OCI-LY7 (cell line): ENCODE measurements at regions of chr11 and their contacts with region 1.

Region 1: DNA sequence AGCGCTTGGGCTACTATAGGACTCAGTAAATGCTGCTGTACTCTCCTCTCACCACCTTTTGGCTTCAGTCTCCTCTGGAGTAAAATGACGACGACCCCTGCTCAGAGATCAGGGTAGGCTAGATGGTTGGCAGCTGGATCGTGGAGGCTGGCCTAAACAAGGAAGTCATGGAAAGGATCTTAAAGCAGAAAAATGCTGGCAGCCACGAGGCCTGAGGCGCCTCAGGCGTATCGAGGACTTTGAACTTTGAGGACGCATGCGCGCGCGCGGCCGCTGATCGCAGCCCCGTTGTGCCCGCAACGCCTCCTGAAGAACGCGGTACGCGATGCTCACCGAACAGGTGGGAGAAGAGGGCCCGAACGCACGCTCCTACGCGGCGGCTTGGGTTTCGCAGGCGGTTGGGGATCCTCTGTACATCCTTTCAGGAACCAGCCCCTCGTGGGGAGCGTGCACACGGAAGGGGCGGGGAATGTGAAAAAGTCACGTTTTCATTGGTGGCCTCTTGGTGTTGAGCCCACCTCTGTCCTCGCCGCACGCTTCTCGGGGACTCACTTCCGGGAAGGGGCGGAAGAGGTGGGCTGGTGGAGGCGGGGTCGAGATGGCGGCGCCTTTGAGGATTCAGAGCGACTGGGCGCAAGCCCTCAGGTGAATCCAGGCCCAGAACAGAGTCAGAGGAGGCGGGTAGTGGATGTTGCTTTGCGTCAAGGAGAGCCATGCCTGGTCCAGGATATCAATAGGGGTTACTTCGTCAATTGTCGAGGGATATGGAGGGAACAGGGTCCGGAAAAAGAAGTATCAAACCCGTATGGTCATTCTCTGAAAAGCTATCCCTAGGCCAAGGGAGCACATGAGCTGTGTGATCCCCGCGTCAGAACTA is at the starts of genes COA4 and PAAF1:
- DNase-seq: peak; percentile 99
- H3K4me3 ChIP-seq: peak within 1 kb of the TSS; percentile 95
- H3K27ac ChIP-seq: peak within 1 kb of the TSS; percentile 92
- H3K4me1 ChIP-seq: peaks cover 26% of the 10 kb centered on the region
- CTCF ChIP-seq: no peak
- total RNA-seq, gene COA4: 153 and 171 TPM in 2 replicates
- total RNA-seq, gene PAAF1: 11.2 and 12.3 TPM in 2 replicates

Region 2: DNA sequence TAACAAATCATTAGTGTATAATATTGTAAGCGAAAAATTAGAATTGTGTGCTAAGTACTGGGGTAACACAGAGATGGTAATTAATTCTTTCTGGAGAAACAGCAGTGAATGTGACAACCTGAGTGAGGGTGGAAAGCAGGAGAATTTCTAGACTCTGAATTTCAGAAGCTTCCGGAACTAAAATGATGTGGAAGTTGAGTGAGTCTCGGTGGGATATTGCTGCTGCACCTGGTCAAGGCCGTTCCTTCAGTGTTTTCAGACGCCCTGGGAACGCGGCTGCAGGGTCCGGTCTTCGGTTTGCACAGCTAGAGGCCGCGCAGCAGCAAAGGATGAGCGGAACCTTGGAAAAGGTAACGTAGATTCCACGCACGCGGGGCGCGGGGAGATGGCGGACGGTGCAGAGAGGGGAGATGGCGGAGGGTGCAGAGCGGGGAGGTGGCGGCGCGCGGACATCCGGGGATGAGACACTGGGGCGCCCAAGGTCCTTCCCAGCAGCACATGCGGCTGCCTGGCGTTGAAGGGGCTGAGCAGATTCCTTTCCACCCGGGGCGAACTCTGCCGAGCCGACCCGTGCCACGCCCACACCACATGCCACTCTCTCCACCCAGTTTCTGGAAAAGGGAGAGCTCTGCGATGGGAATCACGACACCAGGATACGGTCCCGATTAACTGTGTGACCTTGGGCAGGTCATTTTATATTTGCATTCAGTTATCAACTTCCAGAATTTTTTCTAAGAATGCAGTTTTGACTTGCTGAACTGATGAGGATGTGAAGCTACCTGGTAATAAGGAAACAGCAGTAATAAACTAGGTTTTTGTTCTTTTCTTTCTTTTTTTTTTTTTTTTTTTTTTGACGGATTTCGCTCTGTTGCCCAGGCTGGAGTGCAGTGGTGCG is 88.8 kb before region 1 on chr11 and contains the start of gene MRPL48:
- CTCF ChIA-PET with region 1: no interaction called
- POLR2A ChIA-PET with region 1: interaction called, 3 read pairs
- intact Hi-C with region 1: loop called (anchors 2 kb)
- DNase-seq: peak; percentile 92
- H3K4me3 ChIP-seq: peak within 1 kb of the TSS; percentile 77
- H3K27ac ChIP-seq: peak within 1 kb of the TSS; percentile 92
- H3K4me1 ChIP-seq: peaks cover 49% of the 10 kb centered on the region
- CTCF ChIP-seq: no peak
- total RNA-seq, gene MRPL48: 167 and 180 TPM in 2 replicates

Region 3: DNA sequence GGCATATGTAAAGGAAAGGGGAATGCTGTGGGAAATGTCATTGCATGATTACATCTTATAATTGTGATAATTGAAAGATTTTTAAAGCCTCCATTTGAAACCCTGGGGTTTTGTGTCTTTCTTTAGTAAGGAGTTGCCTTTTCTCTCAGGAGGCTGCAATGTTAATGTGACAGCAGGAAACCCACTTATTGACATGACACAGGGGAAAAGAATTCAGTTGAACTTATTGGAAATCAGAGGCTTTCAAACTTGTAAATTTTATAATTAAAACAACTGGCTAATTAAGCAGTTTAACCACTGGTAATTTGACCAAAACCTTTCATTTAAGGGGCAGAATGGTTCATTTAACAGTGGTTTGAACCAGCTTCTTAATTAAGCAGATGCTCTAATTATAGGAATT is 57.8 kb before region 1 on chr11:
- CTCF ChIA-PET with region 1: no interaction called
- POLR2A ChIA-PET with region 1: no interaction called
- intact Hi-C with region 1: no loop called
- DNase-seq: no peak
- H3K4me3 ChIP-seq: no peak overlapping the region
- H3K27ac ChIP-seq: no peak overlapping the region
- H3K4me1 ChIP-seq: no peaks in the 10 kb centered on the region
- CTCF ChIP-seq: no peak

Region 4: GRCh38 chr11:73893041-73893440 is 16.4 kb after region 1 on chr11:
- CTCF ChIA-PET with region 1: no interaction called
- POLR2A ChIA-PET with region 1: interaction called, 10 read pairs
- intact Hi-C with region 1: no loop called
- DNase-seq: no peak
- H3K4me3 ChIP-seq: no peak overlapping the region
- H3K27ac ChIP-seq: no peak overlapping the region
- H3K4me1 ChIP-seq: no peaks in the 10 kb centered on the region
- CTCF ChIP-seq: no peak